Sigmoid colon (tissue), 7 donors: ENCODE measurements at regions of chr3 and their contacts with region 1.

Region 1: DNA sequence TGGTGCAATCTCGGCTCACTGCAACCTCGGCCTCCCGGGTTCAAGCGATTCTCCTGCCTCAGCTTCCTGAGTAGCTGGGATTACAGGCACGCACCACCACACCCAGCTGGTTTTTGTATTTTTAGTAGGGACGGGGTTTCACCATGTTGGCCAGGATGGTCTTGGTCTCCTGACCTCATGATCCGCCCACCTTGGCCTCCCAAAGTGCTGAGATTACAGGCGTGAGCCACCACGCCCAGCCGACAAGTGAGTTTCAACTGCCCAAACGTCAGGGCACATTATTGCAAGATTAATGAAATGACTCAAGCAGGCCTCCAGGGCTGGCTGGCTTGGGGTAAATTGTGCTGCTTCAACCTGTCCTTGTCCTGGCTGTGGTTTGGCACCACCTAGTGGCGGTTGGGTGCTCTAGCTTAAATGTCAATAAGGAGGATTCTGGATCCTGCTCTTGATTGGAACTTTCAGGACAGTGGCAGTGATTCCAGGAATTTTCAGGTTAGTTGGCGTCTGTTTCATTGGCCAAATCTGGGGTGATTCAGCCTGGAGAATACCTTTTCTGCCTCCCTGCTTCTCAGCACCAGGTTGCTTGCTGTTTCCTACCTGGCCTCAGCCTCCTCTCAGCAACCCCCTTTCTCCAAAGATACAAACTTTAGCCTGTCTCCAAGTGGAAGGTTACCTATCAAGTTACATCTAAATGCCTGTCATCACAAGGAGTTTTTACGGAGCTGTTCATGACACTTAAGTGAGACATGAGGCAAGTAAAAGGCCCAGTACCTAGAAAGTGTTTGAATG is 32.4 kb upstream of the SACM1L start:
- DNase-seq: peak; percentile 96
- H3K4me3 ChIP-seq: no peak overlapping the region
- H3K27ac ChIP-seq: no peak overlapping the region
- H3K4me1 ChIP-seq: peaks cover 0 to 33% (median 23%) of the 10 kb centered on the region in 4 donors
- H3K27me3 ChIP-seq: no peaks in the 10 kb centered on the region
- CTCF ChIP-seq: peak; percentile 86 to 96 (median 92)
- EP300 ChIP-seq: no peak
- POLR2A ChIP-seq: no peak

Region 2: GRCh38 chr3:45224824-45225464 is 431.8 kb before region 1 on chr3:
- intact Hi-C with region 1: loop called (anchors 10 kb)
- DNase-seq: peak; percentile 82
- H3K4me3 ChIP-seq: peak overlapping the region; percentile 26 to 73 (median 58)
- H3K27ac ChIP-seq: peak overlapping the region in 3 of 4 donors; percentile 34 to 69 (median 63)
- H3K4me1 ChIP-seq: peaks cover 0 to 23% (median 18%) of the 10 kb centered on the region in 4 donors
- H3K27me3 ChIP-seq: peaks cover 0 to 4% (median 0%) of the 10 kb centered on the region in 3 donors
- CTCF ChIP-seq: peak in 1 of 4 experiments; percentile 52
- EP300 ChIP-seq: no peak
- POLR2A ChIP-seq: no peak

Region 3: DNA sequence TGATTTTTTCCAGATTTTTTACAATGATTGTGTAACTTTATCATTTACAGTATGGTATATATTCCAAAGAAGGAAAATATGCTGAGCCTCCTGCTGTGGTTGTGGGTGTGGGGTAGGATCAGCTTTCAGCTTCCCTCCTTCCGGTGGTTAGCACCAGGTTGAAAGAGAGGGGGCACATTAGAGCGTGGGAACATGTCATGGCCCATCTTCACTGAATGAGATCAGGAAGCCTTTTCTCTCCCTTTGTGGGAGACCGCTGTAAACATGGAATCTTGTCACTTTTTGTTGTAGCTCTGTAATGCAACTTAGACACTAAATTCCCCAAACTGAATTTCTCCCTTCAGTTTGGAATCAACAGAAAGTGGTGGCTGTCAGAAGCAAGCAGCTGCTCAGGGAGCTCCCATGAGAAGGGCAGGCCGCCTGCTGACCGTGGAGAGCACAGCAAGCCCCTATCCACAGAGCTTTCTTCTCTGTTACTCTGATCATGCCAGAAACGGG is 148.9 kb before region 1 on chr3:
- intact Hi-C with region 1: loop called (anchors 1 kb)
- DNase-seq: no peak
- H3K4me3 ChIP-seq: no peak overlapping the region
- H3K27ac ChIP-seq: peak overlapping the region; percentile 20 to 48 (median 24)
- H3K4me1 ChIP-seq: peaks cover 0 to 9% (median 0%) of the 10 kb centered on the region in 4 donors
- H3K27me3 ChIP-seq: no peaks in the 10 kb centered on the region
- CTCF ChIP-seq: no peak
- EP300 ChIP-seq: no peak
- POLR2A ChIP-seq: no peak

Region 4: DNA sequence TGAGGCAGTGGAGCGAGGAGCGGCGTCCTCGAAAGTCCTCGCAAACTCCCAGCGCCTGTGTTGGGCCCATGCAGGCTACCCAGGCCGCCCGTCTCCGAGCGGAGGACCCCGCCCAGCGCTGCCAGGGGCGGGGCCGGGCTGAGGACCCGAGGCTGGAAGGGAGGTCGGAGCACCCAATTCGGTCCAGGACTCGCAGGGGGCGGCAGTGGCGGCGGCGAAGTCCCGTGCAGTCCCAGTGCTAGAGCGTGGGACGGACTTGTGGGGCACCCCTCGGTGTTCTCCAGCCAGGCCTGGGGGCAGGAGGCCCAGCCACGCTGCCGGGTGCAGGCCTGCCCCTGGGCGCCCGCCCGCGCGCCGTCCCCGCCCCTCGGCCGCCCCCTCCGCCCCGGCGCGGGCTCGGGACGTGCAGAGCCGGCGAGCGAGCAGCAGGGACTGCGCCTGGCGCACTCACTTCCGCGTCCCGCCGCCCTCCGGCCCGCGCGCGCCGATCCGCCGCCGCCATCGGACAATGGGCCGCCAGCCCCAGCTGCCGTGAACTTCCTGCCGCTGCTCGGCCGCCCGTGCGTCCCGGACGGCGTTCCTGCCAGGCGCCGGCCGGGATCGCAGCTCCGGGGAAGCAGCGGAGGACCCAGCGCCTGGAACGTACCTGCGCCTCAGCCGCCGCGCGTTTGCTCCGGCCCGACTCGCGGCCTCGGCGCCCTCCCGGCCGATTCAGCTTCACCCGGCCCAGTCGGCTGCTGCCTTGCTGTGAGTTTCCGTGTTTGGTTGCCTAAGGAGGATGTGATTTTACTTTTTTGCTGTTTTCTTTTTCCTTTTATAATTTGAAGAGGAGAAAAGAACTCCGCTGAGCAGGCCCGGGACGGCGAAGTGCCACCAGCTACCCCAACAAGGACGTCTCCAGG is 62.8 kb before region 1 on chr3:
- intact Hi-C with region 1: loop called (anchors 1 kb)
- DNase-seq: peak; percentile 81
- H3K4me3 ChIP-seq: peak overlapping the region; percentile 50 to 84 (median 72)
- H3K27ac ChIP-seq: peak overlapping the region; percentile 85 to 93 (median 88)
- H3K4me1 ChIP-seq: peaks cover 0 to 59% (median 51%) of the 10 kb centered on the region in 4 donors
- H3K27me3 ChIP-seq: no peaks in the 10 kb centered on the region
- CTCF ChIP-seq: no peak
- EP300 ChIP-seq: no peak
- POLR2A ChIP-seq: no peak

Region 5: GRCh38 chr3:45677033-45677433 is 20.3 kb after region 1 on chr3:
- intact Hi-C with region 1: no loop called
- DNase-seq: peak; percentile 89
- H3K4me3 ChIP-seq: no peak overlapping the region
- H3K27ac ChIP-seq: peak overlapping the region; percentile 62 to 77 (median 66)
- H3K4me1 ChIP-seq: peaks cover 0 to 12% (median 4%) of the 10 kb centered on the region in 4 donors
- H3K27me3 ChIP-seq: no peaks in the 10 kb centered on the region
- CTCF ChIP-seq: no peak
- EP300 ChIP-seq: no peak
- POLR2A ChIP-seq: no peak